Activated B cell treated with CpG ODN at 0.5 μM for 24 hours (primary cell): ENCODE measurements at regions of chr11 and their contacts with region 1.

Region 1: GRCh38 chr11:15006139-15006759 is 34.1 kb upstream of the CALCA start:
- DNase-seq: no peak
- ATAC-seq: peak; percentile 42
- H3K4me3 Mint-ChIP-seq: no peak overlapping the region
- H3K27ac Mint-ChIP-seq: no peak overlapping the region
- H3K4me1 Mint-ChIP-seq: no peaks in the 10 kb centered on the region
- H3K27me3 Mint-ChIP-seq: peaks cover 32% of the 10 kb centered on the region
- CTCF ChIP-seq: no peak

Region 2: DNA sequence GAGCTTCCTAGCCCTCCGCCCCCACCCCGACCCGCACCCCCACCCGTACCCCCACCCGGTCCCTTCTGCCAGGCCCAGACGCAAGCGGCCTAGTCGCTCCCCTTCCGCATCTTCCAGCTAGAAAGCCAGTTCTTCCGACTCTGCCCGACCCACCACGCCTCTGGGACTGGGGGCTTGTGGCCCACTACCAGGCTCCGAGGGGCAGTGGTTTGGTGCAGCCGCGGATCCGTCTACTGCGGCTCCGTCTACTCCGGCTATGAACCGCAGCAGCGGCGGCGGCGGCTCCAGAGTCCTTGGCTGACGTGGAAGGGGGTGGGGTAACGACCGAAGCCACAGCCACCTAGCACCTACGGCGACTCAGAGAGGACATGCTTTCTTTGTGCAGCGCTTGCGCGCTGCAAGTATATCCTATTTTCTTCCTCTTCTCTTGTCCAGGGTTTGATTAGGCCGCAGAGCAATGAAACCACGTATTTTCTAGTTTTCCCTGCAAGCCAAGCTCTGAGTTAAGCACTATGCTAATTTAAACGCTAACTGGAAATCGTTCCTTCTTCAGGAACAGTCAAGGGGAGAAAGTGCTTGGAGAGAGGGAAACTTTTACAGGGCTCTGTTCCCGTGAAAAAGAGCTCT is 506.6 kb before region 1 on chr11 and contains the start of gene COPB1:
- CTCF ChIA-PET with region 1: interaction called, 4 read pairs
- POLR2A ChIA-PET with region 1: no interaction called
- intact Hi-C with region 1: loop called (anchors 1 kb)
- DNase-seq: peak; percentile 81
- ATAC-seq: peak; percentile 95
- H3K4me3 Mint-ChIP-seq: peak within 1 kb of the TSS; percentile 100
- H3K27ac Mint-ChIP-seq: peak within 1 kb of the TSS; percentile 96
- H3K4me1 Mint-ChIP-seq: peaks cover 41% of the 10 kb centered on the region
- H3K27me3 Mint-ChIP-seq: no peaks in the 10 kb centered on the region
- CTCF ChIP-seq: no peak
- total RNA-seq, gene COPB1: 80.7 and 90.1 TPM in 2 replicates

Region 3: GRCh38 chr11:14789879-14790484 is 216.3 kb before region 1 on chr11:
- CTCF ChIA-PET with region 1: interaction called, 31 read pairs
- POLR2A ChIA-PET with region 1: no interaction called
- intact Hi-C with region 1: loop called (anchors 1 kb)
- DNase-seq: no peak
- ATAC-seq: no peak
- H3K4me3 Mint-ChIP-seq: no peak overlapping the region
- H3K27ac Mint-ChIP-seq: no peak overlapping the region
- H3K4me1 Mint-ChIP-seq: no peaks in the 10 kb centered on the region
- H3K27me3 Mint-ChIP-seq: no peaks in the 10 kb centered on the region
- CTCF ChIP-seq: peak; percentile 33

Region 4: GRCh38 chr11:14974515-14975251 is 31.6 kb before region 1 on chr11:
- CTCF ChIA-PET with region 1: interaction called, 23 read pairs
- POLR2A ChIA-PET with region 1: no interaction called
- intact Hi-C with region 1: loop called (anchors 1 kb)
- DNase-seq: no peak
- ATAC-seq: peak; percentile 51
- H3K4me3 Mint-ChIP-seq: peak overlapping the region; percentile 62
- H3K27ac Mint-ChIP-seq: no peak overlapping the region
- H3K4me1 Mint-ChIP-seq: peaks cover 30% of the 10 kb centered on the region
- H3K27me3 Mint-ChIP-seq: peaks cover 62% of the 10 kb centered on the region
- CTCF ChIP-seq: no peak

Region 5: GRCh38 chr11:15136166-15136565 is 129.9 kb after region 1 on chr11:
- CTCF ChIA-PET with region 1: no interaction called
- POLR2A ChIA-PET with region 1: no interaction called
- intact Hi-C with region 1: no loop called
- DNase-seq: no peak
- ATAC-seq: no peak
- H3K4me3 Mint-ChIP-seq: no peak overlapping the region
- H3K27ac Mint-ChIP-seq: no peak overlapping the region
- H3K4me1 Mint-ChIP-seq: peaks cover 7% of the 10 kb centered on the region
- H3K27me3 Mint-ChIP-seq: peaks cover 12% of the 10 kb centered on the region
- CTCF ChIP-seq: no peak

Region 6: GRCh38 chr11:15622231-15622890 is 616.1 kb after region 1 on chr11:
- CTCF ChIA-PET with region 1: no interaction called
- POLR2A ChIA-PET with region 1: no interaction called
- intact Hi-C with region 1: no loop called
- DNase-seq: no peak
- ATAC-seq: no peak
- H3K4me3 Mint-ChIP-seq: no peak overlapping the region
- H3K27ac Mint-ChIP-seq: no peak overlapping the region
- H3K4me1 Mint-ChIP-seq: no peaks in the 10 kb centered on the region
- H3K27me3 Mint-ChIP-seq: no peaks in the 10 kb centered on the region
- CTCF ChIP-seq: no peak